Head of caudate nucleus (tissue), 42 donors: ENCODE measurements at regions of chr19 and their contacts with region 1.

Region 1: GRCh38 chr19:12733369-12734176 is 911 bp downstream of the TRIR start:
- DNase-seq: peak in 18 of 42 donors; percentile 15 to 63 (median 37)

Region 2: DNA sequence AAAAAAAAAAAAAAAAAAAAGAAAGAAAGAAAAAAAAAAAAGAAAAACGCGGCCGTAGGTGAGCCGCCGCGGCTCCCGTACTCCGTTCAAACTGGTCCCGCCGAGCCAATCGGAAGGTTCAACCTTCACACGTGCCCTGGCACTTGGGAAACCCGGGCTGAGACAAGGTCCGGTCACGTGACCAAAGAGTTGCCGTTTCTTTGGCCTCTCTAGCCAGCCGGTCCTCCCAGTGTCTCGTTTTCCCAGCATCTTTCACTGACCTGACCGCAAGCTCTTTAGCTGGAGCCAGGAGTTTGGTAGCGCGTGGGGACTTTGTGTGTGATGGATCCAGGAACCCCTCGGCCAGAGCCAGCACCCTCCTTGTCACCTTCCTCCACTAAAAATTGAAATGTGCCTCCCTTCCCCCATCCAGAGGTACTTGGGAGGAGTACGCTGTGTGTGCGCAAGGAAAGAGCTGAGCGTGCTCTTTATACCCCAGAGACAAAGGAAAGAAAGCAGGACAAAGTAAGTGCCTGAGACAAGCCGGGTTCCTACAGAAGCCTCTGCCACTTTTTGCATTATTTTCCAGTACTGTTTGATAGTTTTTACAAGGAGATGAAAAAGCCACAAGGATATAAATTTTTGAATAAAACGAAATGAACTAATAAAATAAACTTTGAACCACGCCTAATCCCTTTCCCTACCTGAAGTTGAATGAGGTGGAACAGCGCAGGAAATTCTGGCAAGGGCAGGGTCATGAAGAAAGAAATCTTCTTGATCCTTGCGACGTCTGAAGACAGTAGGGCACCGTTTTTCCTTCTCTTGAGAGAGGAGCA is 10.8 kb before region 1 on chr19:
- intact Hi-C with region 1: loop called (anchors 1 kb)
- DNase-seq: peak; percentile 94 to 100 (median 98)

Region 3: GRCh38 chr19:12782229-12783028 is 48.9 kb after region 1 on chr19:
- intact Hi-C with region 1: no loop called
- DNase-seq: peak; percentile 77 to 99 (median 95)

Region 4: GRCh38 chr19:12821761-12822160 is 88.2 kb after region 1 on chr19:
- intact Hi-C with region 1: no loop called
- DNase-seq: no peak